ENCODE measurements at regions of chr1 and their contacts with region 1.

Region 1: GRCh38 chr1:212994926-212995325 is 20.7 kb downstream of the ANGEL2 start:
- DNase-seq: no peak
- ATAC-seq: no peak
- H3K4me3 ChIP-seq: no peak overlapping the region
- H3K27ac ChIP-seq: no peak overlapping the region
- H3K4me1 ChIP-seq: no peaks in the 10 kb centered on the region
- H3K27me3 ChIP-seq: no peaks in the 10 kb centered on the region
- CTCF ChIP-seq: no peak
- EP300 ChIP-seq: no peak
- POLR2A ChIP-seq: no peak
- RAD21 ChIP-seq: no peak

Region 2: DNA sequence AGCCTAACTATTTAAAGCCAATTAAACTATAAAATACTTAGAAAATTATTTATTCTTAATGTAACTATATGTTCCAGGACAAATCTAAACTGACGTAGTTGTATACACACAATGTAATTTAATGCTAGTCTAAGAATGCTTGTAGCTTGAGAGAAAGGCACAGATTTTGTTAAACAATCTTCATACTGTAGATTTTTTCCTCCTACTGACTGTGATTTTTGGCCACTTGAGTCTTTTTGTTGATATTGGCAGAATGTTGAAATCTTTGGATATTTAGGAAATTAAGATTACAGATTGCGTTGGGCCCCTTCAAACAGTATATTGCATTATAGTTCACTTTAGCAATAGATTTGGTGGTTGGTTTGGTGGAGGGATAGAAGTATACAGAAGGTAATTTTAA is 345.9 kb before region 1 on chr1:
- CTCF ChIA-PET with region 1: no interaction called
- POLR2A ChIA-PET with region 1: no interaction called
- RAD21 ChIA-PET with region 1: no interaction called
- SMC1A ChIA-PET with region 1: no interaction called
- in situ Hi-C with region 1: no loop called
- intact Hi-C with region 1: no loop called
- DNase-seq: no peak
- ATAC-seq: no peak
- H3K4me3 ChIP-seq: no peak overlapping the region
- H3K27ac ChIP-seq: no peak overlapping the region
- H3K4me1 ChIP-seq: no peaks in the 10 kb centered on the region
- H3K27me3 ChIP-seq: no peaks in the 10 kb centered on the region
- CTCF ChIP-seq: no peak
- EP300 ChIP-seq: no peak
- POLR2A ChIP-seq: no peak
- RAD21 ChIP-seq: no peak

Region 3: GRCh38 chr1:212749821-212750535 is 244.9 kb before region 1 on chr1:
- CTCF ChIA-PET with region 1: interaction called, 11 read pairs
- POLR2A ChIA-PET with region 1: no interaction called
- RAD21 ChIA-PET with region 1: interaction called, 6 read pairs
- SMC1A ChIA-PET with region 1: interaction called, 5 read pairs
- in situ Hi-C with region 1: no loop called
- intact Hi-C with region 1: no loop called
- DNase-seq: peak; percentile 51
- ATAC-seq: peak; percentile 65
- H3K4me3 ChIP-seq: peak overlapping the region; percentile 32; the same call in 1 of the 2 replicates
- H3K27ac ChIP-seq: peak overlapping the region; percentile 59
- H3K4me1 ChIP-seq: peaks cover 41% of the 10 kb centered on the region
- H3K27me3 ChIP-seq: no peaks in the 10 kb centered on the region
- CTCF ChIP-seq: peak; percentile 52 to 69 (median 53); a peak in 5 of 6 replicates
- EP300 ChIP-seq: no peak; a peak in 1 of 4 replicates
- POLR2A ChIP-seq: no peak
- RAD21 ChIP-seq: peak; percentile 47

Region 4: GRCh38 chr1:212805767-212806166 is 189.2 kb before region 1 on chr1:
- CTCF ChIA-PET with region 1: interaction called, 18 read pairs
- POLR2A ChIA-PET with region 1: no interaction called
- RAD21 ChIA-PET with region 1: interaction called, 3 read pairs
- SMC1A ChIA-PET with region 1: interaction called, 7 read pairs
- in situ Hi-C with region 1: no loop called
- intact Hi-C with region 1: no loop called
- DNase-seq: no peak
- ATAC-seq: peak; percentile 36; the same call in 2 of the 3 replicates
- H3K4me3 ChIP-seq: no peak overlapping the region
- H3K27ac ChIP-seq: no peak overlapping the region
- H3K4me1 ChIP-seq: no peaks in the 10 kb centered on the region
- H3K27me3 ChIP-seq: no peaks in the 10 kb centered on the region
- CTCF ChIP-seq: no peak
- EP300 ChIP-seq: no peak
- POLR2A ChIP-seq: no peak
- RAD21 ChIP-seq: no peak

Region 5: GRCh38 chr1:212857992-212858460 is 136.9 kb before region 1 on chr1 and contains the start of gene FLVCR1:
- CTCF ChIA-PET with region 1: interaction called, 6 read pairs
- POLR2A ChIA-PET with region 1: interaction called, 5 read pairs
- RAD21 ChIA-PET with region 1: interaction called, 11 read pairs
- SMC1A ChIA-PET with region 1: interaction called, 11 read pairs
- in situ Hi-C with region 1: no loop called
- intact Hi-C with region 1: no loop called
- DNase-seq: peak; percentile 79
- ATAC-seq: peak; percentile 97
- H3K4me3 ChIP-seq: peak within 1 kb of the TSS; percentile 98
- H3K27ac ChIP-seq: peak within 1 kb of the TSS; percentile 79
- H3K4me1 ChIP-seq: peaks cover 6% of the 10 kb centered on the region
- H3K27me3 ChIP-seq: no peaks in the 10 kb centered on the region
- CTCF ChIP-seq: no peak
- EP300 ChIP-seq: no peak
- POLR2A ChIP-seq: peak; percentile 85
- RAD21 ChIP-seq: no peak
- polyA plus RNA-seq, gene FLVCR1: 7.1 to 8.6 TPM

Region 6: GRCh38 chr1:212950243-212951125 is 44.4 kb before region 1 on chr1 and contains the start of gene VASH2:
- CTCF ChIA-PET with region 1: interaction called, 15 read pairs
- POLR2A ChIA-PET with region 1: interaction called, 3 read pairs
- RAD21 ChIA-PET with region 1: interaction called, 17 read pairs
- SMC1A ChIA-PET with region 1: interaction called, 12 read pairs
- in situ Hi-C with region 1: no loop called
- intact Hi-C with region 1: loop called (anchors 5 kb)
- DNase-seq: peak; percentile 59
- ATAC-seq: peak; percentile 92
- H3K4me3 ChIP-seq: peak within 1 kb of the TSS; percentile 95
- H3K27ac ChIP-seq: peak within 1 kb of the TSS; percentile 92
- H3K4me1 ChIP-seq: peaks cover 48% of the 10 kb centered on the region
- H3K27me3 ChIP-seq: no peaks in the 10 kb centered on the region
- CTCF ChIP-seq: no peak; a peak in 1 of 6 replicates
- EP300 ChIP-seq: no peak
- POLR2A ChIP-seq: peak; percentile 71
- RAD21 ChIP-seq: no peak
- polyA plus RNA-seq, gene VASH2: 5.4 to 6.5 TPM

Region 7: DNA sequence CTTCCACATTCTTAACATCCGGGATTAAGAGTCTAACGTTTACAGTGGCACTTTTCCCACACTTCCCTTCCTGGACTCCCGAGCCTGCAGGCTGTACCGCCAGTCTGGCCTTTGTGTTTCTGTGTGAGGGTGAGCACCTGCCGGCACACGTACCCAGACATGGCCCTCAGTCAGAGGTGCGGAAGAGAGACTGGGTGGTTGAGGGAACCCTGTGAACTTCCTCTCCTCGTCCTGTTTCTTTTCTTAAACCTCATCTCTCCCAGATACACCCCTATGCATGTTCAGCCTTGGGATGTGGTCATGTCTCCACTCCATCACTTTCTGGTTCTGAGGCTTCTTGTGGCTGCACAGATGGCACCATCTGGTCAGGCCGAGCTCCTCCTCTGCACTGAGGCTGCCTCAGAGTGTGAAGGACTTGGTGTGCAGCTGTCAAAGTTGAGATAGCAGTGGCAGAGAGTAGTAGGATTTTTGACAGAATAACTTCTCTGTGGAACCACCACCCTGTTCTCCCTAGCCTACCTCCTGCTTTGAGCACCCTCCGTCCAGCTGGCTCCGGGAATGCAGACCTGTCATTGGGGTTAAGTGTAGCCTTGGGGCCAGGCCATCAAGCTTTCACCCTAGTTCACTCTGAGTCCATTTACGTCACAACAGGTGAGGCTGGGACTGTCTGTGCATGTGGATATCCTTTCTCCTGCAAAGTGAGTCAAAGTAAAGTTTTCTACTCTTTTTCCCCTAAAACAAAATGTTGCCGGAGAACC is 13.2 kb before region 1 on chr1:
- CTCF ChIA-PET with region 1: interaction called, 21 read pairs
- POLR2A ChIA-PET with region 1: interaction called, 9 read pairs
- RAD21 ChIA-PET with region 1: interaction called, 23 read pairs
- SMC1A ChIA-PET with region 1: interaction called, 42 read pairs
- in situ Hi-C with region 1: no loop called
- intact Hi-C with region 1: no loop called
- DNase-seq: peak; percentile 93
- ATAC-seq: peak; percentile 47
- H3K4me3 ChIP-seq: no peak overlapping the region
- H3K27ac ChIP-seq: peak overlapping the region; percentile 93
- H3K4me1 ChIP-seq: peaks cover 56% of the 10 kb centered on the region
- H3K27me3 ChIP-seq: no peaks in the 10 kb centered on the region
- CTCF ChIP-seq: no peak
- EP300 ChIP-seq: no peak; a peak in 1 of 4 replicates
- POLR2A ChIP-seq: peak; percentile 65
- RAD21 ChIP-seq: no peak

Region 8: GRCh38 chr1:213070406-213070805 is 75.5 kb after region 1 on chr1:
- CTCF ChIA-PET with region 1: interaction called, 47 read pairs
- POLR2A ChIA-PET with region 1: interaction called, 3 read pairs
- RAD21 ChIA-PET with region 1: interaction called, 10 read pairs
- SMC1A ChIA-PET with region 1: interaction called, 16 read pairs
- in situ Hi-C with region 1: no loop called
- intact Hi-C with region 1: no loop called
- DNase-seq: peak; percentile 84
- ATAC-seq: peak; percentile 92
- H3K4me3 ChIP-seq: 0 out of 2 replicates have a peak overlapping the region, but pooled peaks have one; percentile 6
- H3K27ac ChIP-seq: peak overlapping the region; percentile 73
- H3K4me1 ChIP-seq: peaks cover 10% of the 10 kb centered on the region
- H3K27me3 ChIP-seq: no peaks in the 10 kb centered on the region
- CTCF ChIP-seq: peak; percentile 33 to 47 (median 34); a peak in 4 of 6 replicates
- EP300 ChIP-seq: no peak
- POLR2A ChIP-seq: no peak
- RAD21 ChIP-seq: peak; percentile 72

Measured in GM12878 (cell line).